Posterior vena cava (tissue), 2 donors: ENCODE measurements at regions of chr9 and their contacts with region 1.

Region 1: DNA sequence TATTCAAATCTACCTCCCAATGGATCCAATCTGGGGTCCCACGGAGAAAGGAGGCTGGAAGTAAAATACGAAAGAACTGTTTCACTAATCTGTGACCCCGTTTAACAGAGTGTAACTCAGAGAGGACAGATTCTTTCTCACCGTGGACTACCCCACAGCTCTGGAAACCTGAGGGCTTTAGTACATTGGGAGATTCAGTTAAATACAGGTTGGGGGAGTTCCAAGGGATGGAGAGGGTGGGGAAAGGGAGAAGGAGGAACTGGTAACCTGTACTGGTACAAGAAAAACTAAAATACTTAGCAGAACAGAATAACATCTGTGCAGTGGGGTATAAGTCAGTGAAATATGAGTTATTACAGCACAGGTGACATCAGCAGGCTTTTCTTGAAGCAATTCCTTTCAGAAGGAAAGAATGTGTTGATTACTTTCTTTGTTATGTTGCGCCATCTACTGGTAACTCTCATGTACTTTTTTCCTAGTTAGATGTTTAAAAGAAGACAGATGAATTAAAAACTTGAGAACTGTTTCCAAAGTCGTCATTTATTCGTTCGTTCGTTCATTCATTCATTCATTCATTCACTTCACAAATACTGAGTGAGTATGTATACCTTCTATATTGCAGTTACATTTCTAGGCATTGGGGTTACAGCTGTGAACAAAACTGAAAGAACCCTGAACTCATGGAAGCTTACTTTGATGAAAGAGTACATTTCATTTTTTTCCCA is 30.0 kb upstream of the STOM start:
- DNase-seq: no peak

Region 2: DNA sequence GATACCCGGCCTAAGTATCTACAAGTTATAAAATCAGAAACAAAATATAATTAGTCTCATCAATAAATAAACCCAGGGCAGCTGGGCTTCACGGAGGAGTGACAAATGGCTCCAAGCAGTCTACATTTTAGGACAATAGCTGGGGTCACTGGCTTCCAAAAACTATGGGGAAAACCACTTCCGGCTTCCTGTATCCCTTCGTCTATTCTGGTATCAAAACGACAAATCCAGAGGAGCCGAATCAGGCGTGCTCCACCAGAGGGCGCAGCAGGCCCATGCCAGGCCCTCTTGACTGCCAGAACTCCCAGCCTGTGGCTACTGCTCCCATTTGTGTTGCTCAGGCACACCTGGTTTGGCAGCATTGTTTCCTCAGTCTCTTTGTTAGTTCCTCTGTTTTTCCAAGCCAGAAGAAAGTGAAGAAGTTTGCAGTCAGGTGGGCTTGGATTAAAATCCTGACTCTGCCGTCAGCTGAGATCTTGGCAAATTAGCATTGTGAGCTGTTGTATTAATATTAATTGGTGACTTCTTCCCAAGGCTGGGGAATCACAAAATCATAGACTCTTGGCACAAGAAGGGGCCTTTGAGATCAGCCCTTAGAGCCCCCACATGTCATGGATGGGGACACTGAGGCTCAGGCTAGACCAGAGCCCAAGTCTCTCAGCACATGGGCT is 186.8 kb before region 1 on chr9:
- intact Hi-C with region 1: loop called in 1 of 2 experiments (anchors 5 kb)
- DNase-seq: peak; percentile 96

Region 3: GRCh38 chr9:121386442-121387185 is 13.4 kb before region 1 on chr9:
- intact Hi-C with region 1: loop called in 1 of 2 experiments (anchors 1 kb)
- DNase-seq: no peak